Activated naive CD4-positive, alpha-beta T cell treated with anti-CD3 and anti-CD28 coated beads for 36 hours (primary cell): ENCODE measurements at regions of chr14 and their contacts with region 1.

Region 1: GRCh38 chr14:61388173-61388975 is 67.0 kb downstream of the PRKCH start:
- DNase-seq: peak; percentile 50
- H3K4me3 Mint-ChIP-seq: no peak overlapping the region
- H3K27ac Mint-ChIP-seq: no peak overlapping the region
- H3K4me1 Mint-ChIP-seq: peaks cover 23% of the 10 kb centered on the region
- H3K27me3 Mint-ChIP-seq: no peaks in the 10 kb centered on the region

Region 2: GRCh38 chr14:60637479-60638315 is 750.7 kb before region 1 on chr14:
- CTCF ChIA-PET with region 1: no interaction called
- intact Hi-C with region 1: no loop called
- DNase-seq: no peak
- H3K4me3 Mint-ChIP-seq: peak overlapping the region; percentile 46
- H3K27ac Mint-ChIP-seq: no peak overlapping the region
- H3K4me1 Mint-ChIP-seq: peaks cover 20% of the 10 kb centered on the region
- H3K27me3 Mint-ChIP-seq: peaks cover 56% of the 10 kb centered on the region

Region 3: DNA sequence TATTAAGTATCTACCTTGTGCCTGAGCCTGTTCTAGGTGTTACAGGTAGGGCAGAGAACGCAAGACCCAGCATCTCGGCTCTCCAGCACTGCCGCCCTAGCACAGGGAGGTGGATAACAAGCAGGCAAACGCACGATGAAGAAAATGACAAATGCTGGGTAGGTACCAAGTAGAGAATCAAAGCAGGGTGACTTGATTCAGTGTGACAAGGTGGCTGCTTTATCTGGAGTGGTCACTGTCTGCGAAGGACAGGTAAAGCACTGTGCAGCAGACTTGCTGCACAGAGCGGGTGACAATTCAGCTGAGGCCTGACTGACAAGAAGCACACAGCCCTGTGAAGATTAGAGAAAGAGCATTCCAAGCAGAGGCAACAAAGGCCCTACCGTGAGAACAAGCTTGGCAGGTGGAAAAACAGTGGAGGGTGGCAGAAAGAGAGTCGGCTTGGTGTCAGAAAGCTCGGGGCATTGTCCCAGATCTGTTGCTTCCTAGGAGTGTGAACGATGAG is 54.1 kb before region 1 on chr14:
- CTCF ChIA-PET with region 1: interaction called, 14 read pairs
- intact Hi-C with region 1: no loop called
- DNase-seq: peak; percentile 51
- H3K4me3 Mint-ChIP-seq: peak overlapping the region; percentile 72
- H3K27ac Mint-ChIP-seq: peak overlapping the region; percentile 95
- H3K4me1 Mint-ChIP-seq: peaks cover 85% of the 10 kb centered on the region
- H3K27me3 Mint-ChIP-seq: no peaks in the 10 kb centered on the region

Region 4: GRCh38 chr14:61347826-61348443 is 40.4 kb before region 1 on chr14:
- CTCF ChIA-PET with region 1: interaction called, 15 read pairs
- intact Hi-C with region 1: loop called (anchors 1 kb)
- DNase-seq: peak; percentile 48
- H3K4me3 Mint-ChIP-seq: peak overlapping the region; percentile 64
- H3K27ac Mint-ChIP-seq: peak overlapping the region; percentile 97
- H3K4me1 Mint-ChIP-seq: peaks cover 99% of the 10 kb centered on the region
- H3K27me3 Mint-ChIP-seq: no peaks in the 10 kb centered on the region

Region 5: GRCh38 chr14:61403411-61403810 is 15.0 kb after region 1 on chr14:
- CTCF ChIA-PET with region 1: interaction called, 4 read pairs
- intact Hi-C with region 1: loop called (anchors 1 kb)
- DNase-seq: no peak
- H3K4me3 Mint-ChIP-seq: peak overlapping the region; percentile 63
- H3K27ac Mint-ChIP-seq: peak overlapping the region; percentile 91
- H3K4me1 Mint-ChIP-seq: peaks cover 86% of the 10 kb centered on the region
- H3K27me3 Mint-ChIP-seq: no peaks in the 10 kb centered on the region

Region 6: GRCh38 chr14:61433169-61433568 is 44.8 kb after region 1 on chr14:
- CTCF ChIA-PET with region 1: no interaction called
- intact Hi-C with region 1: loop called (anchors 1 kb)
- DNase-seq: no peak
- H3K4me3 Mint-ChIP-seq: peak overlapping the region; percentile 61
- H3K27ac Mint-ChIP-seq: peak overlapping the region; percentile 93
- H3K4me1 Mint-ChIP-seq: peaks cover 93% of the 10 kb centered on the region
- H3K27me3 Mint-ChIP-seq: no peaks in the 10 kb centered on the region

Region 7: DNA sequence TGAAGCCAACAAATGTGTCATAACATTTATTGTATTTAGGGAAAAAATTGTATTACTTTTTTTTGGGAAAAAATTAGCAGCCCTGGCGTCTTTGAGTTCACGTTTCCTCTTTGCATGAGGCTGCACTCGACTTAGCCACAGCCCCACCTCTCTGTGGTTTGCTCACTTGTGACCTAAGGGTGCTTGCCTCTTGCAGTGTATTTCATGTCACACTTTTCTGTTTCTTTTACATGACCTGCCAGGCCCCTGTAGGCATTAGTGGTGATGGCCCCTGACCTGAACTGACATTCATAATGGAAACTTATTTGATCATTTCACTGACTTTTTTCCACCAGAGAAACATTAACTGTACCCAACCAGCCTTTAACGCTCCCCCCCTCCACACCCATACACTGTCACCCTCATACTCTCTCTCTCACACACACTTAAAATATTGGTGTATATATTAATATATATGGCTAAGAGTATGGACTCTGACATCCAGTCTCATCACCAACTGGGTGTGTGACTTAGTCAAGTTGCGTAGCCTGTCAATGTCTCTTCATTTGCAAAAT is 55.9 kb after region 1 on chr14:
- CTCF ChIA-PET with region 1: interaction called, 3 read pairs
- intact Hi-C with region 1: loop called (anchors 1 kb)
- DNase-seq: peak; percentile 90
- H3K4me3 Mint-ChIP-seq: peak overlapping the region; percentile 66
- H3K27ac Mint-ChIP-seq: peak overlapping the region; percentile 96
- H3K4me1 Mint-ChIP-seq: peaks cover 93% of the 10 kb centered on the region
- H3K27me3 Mint-ChIP-seq: no peaks in the 10 kb centered on the region

Region 8: DNA sequence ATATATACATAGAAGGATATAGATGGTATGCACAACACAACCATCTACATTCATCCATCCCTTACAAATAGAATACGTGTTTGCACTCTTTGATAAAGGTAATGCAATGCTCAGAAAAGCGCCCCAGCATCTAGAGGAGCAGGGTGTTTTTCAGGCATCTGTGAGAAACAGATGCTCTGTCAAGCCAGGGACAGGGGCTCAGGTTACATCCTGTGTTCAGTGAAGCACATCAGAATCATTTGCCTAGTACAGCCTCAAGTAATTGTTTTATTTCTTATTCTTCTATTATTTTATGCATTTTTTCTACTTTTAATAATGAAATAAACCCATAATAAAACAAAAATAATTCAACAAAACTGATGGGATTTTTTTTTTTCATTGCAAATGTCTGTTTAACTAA is 256.5 kb after region 1 on chr14:
- CTCF ChIA-PET with region 1: no interaction called
- intact Hi-C with region 1: no loop called
- DNase-seq: no peak
- H3K4me3 Mint-ChIP-seq: no peak overlapping the region
- H3K27ac Mint-ChIP-seq: no peak overlapping the region
- H3K4me1 Mint-ChIP-seq: peaks cover 42% of the 10 kb centered on the region
- H3K27me3 Mint-ChIP-seq: no peaks in the 10 kb centered on the region

Region 9: GRCh38 chr14:61694830-61695694 is 306.7 kb after region 1 on chr14 and contains the start of gene HIF1A:
- CTCF ChIA-PET with region 1: no interaction called
- intact Hi-C with region 1: loop called (anchors 5 kb)
- DNase-seq: peak; percentile 98
- H3K4me3 Mint-ChIP-seq: peak within 1 kb of the TSS; percentile 94
- H3K27ac Mint-ChIP-seq: peak within 1 kb of the TSS; percentile 93
- H3K4me1 Mint-ChIP-seq: peaks cover 44% of the 10 kb centered on the region
- H3K27me3 Mint-ChIP-seq: no peaks in the 10 kb centered on the region
- total RNA-seq, gene HIF1A: 398 to 417 TPM